Left colon (tissue), 2 donors: ENCODE measurements at regions of chr20 and their contacts with region 1.

Region 1: GRCh38 chr20:5100684-5101347 is 18.9 kb downstream of the PCNA start:
- DNase-seq: peak; percentile 46 to 85
- ATAC-seq: peak; percentile 87

Region 2: DNA sequence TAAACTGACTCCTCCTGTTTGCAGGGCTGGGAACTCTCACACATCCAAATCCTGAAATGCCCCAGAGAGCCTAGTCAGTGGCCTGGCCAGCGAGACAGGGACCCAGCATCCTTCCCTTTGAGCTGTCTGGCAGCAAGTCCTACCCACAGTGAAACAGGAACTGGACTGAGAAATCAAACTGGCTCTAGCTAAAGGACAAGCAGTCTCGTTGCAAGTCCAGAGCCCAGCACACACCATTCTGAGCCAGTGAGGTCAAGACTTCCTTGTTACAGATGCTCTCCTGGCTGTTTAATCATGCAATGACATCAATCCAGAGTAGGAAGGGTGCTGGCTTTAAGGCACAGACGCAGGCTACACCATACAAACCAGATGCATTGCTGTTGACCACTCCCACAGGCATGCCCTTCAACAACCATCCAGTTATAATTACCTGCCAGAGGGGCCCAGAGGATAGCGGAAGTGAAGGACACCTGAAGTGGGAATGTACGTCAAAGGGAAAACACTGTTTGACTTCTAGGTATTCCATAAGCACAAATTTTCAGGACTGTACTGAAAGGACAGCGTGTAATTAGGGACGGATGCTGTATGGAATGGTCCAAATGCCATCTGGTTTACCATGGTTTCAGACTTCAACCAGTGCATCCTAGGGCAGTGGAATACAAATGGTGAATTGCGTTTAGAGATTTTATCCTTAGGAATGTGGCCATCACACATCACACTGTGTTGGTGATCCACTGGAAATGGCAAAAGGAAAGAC is 213.9 kb before region 1 on chr20:
- intact Hi-C with region 1: no loop called
- DNase-seq: no peak
- ATAC-seq: no peak

Region 3: DNA sequence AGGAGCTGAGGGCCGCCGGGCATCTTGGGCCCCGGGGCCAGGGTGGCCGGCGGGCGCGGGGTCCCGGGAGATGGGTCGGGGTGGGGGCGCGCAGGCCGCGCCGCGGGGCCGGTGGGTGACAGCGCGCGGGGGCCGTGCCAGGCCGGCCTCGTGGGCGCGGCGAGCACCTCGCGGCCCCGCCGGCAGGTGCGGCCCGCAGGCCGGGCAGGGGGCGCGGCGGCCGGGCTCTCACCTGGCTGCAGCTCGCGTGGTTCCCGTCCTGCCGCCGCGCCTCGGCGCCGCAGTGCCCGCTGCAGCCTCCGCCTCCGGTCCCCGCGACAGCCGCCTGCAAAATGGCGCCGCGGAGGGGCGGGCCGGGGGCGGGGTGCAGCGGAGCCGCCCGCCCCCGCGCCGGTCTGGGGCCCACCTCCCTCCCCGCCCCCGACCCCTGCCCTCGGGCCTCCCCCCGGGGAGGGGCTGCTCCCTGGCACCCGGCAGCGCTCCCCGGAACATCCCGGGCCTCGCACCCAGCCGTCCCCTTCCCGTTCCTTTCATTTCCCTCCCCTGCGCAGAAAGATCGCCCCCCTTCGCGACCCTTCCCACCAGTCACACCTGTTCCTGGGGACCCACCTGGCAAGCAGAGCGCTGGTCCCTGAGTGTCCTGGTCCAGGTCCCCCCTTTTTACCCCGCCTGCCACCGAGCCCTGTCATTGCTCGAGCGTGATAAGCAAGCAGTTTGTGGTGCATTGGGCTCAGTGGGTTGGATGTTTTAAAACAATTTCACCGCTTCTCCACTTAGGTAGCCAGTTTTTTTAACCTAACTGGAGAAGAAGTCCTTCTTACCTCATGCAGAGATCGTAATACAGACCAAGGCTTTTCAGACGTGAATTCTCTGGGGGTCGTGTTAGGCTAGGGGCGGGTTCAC is 99.4 kb before region 1 on chr20 and contains the start of gene SLC23A2:
- intact Hi-C with region 1: loop called in 1 of 2 experiments (anchors 10 kb)
- DNase-seq: peak; percentile 27 to 61
- ATAC-seq: peak; percentile 83
- total RNA-seq, gene SLC23A2: 6.5 to 10.1 TPM

Region 4: DNA sequence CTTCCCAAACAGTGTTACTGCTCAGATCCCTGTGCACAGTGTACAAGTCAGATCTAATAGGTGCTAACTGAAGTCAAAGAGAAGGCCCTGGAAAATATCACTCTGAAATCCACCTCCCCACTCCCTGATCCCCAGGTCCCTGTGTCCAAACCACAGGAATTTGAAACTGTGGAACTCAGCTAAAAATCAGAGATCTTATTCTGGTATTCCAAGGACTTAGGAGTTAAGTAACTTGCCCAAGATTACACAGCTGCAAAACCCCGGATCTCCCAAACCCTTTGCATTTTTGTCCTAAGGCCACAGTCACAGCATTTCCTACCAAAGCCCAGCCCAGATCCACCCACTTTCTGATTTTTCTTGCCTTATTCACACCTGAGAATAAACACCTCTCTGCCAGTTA is 67.2 kb before region 1 on chr20:
- intact Hi-C with region 1: no loop called
- DNase-seq: no peak
- ATAC-seq: no peak